Breast epithelium (tissue), 4 donors: ENCODE measurements at regions of chr6 and their contacts with region 1.

Region 1: GRCh38 chr6:130070792-130071191 is 52.4 kb downstream of the L3MBTL3 start:
- DNase-seq: no peak
- H3K4me3 ChIP-seq: no peak overlapping the region
- H3K27ac ChIP-seq: no peak overlapping the region
- H3K4me1 ChIP-seq: no peaks in the 10 kb centered on the region
- H3K27me3 ChIP-seq: no peaks in the 10 kb centered on the region
- CTCF ChIP-seq: no peak
- POLR2A ChIP-seq: no peak

Region 2: GRCh38 chr6:129785047-129785755 is 285.6 kb before region 1 on chr6:
- intact Hi-C with region 1: no loop called
- DNase-seq: no peak
- H3K4me3 ChIP-seq: no peak overlapping the region
- H3K27ac ChIP-seq: no peak overlapping the region
- H3K4me1 ChIP-seq: no peaks in the 10 kb centered on the region
- H3K27me3 ChIP-seq: no peaks in the 10 kb centered on the region
- CTCF ChIP-seq: no peak
- POLR2A ChIP-seq: no peak

Region 3: DNA sequence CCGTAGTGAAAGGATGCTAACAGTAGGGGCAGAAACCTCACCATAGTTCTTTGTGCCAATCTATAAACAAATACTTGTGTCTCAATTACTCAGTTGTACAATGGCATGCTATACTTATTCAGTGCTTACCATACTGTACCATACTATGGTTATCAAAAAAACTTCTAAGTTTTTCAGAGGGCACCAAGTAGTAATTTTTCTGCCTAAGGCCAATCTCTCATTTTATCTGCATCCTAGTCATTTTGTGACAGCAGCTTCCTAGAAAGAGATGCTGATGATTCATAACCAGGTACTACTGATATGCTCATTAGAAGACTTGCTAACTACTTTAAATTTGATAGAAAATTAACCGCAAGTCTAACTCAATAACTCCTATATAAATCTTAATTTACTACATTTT is 252.5 kb before region 1 on chr6:
- intact Hi-C with region 1: loop called (anchors 5 kb)
- DNase-seq: no peak
- H3K4me3 ChIP-seq: no peak overlapping the region
- H3K27ac ChIP-seq: no peak overlapping the region
- H3K4me1 ChIP-seq: no peaks in the 10 kb centered on the region
- H3K27me3 ChIP-seq: no peaks in the 10 kb centered on the region
- CTCF ChIP-seq: no peak
- POLR2A ChIP-seq: no peak